Activated CD8-positive, alpha-beta T cell treated with anti-CD3 and anti-CD28 coated beads for 36 hours (primary cell): ENCODE measurements at regions of chr10 and their contacts with region 1.

Region 1: DNA sequence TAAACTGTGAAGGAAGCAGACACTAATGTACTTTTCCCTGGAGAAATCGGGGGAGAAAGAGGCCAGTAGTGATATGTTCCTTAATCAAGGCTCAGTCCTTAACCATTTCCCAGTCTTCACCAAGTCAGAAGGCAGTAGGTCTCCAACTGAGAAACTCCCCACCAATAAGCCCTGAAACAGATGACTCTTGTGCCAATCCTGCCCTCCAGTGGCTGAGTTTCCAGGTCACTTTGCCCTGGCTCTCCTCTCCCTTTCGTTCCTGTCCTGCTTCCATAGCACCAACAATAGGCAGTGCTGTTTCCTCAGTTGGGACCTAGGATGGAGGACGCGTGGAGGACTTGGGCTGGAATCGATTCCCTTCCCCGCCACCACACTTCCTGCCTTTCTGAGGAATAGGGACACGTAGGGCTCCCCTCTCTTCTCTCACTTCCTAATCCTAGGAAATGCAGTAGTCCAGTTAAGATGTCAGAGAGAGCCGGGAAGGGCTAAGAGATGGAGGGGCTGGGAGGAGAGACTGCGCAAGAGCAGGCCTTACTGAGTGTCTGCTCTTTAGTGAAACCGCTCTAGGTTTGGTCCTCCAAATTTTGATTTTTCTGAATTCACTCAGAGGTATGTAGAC is 23.4 kb downstream of the ATOH7 start:
- DNase-seq: peak; percentile 50
- ATAC-seq: peak; percentile 53
- H3K4me3 Mint-ChIP-seq: no peak overlapping the region
- H3K27ac Mint-ChIP-seq: no peak overlapping the region
- H3K4me1 Mint-ChIP-seq: no peaks in the 10 kb centered on the region
- H3K27me3 Mint-ChIP-seq: peaks cover 7% of the 10 kb centered on the region
- CTCF ChIP-seq: no peak

Region 2: GRCh38 chr10:68196701-68197100 is 11.8 kb before region 1 on chr10:
- CTCF ChIA-PET with region 1: interaction called, 14 read pairs
- POLR2A ChIA-PET with region 1: no interaction called
- intact Hi-C with region 1: no loop called
- DNase-seq: no peak
- ATAC-seq: no peak
- H3K4me3 Mint-ChIP-seq: no peak overlapping the region
- H3K27ac Mint-ChIP-seq: no peak overlapping the region
- H3K4me1 Mint-ChIP-seq: no peaks in the 10 kb centered on the region
- H3K27me3 Mint-ChIP-seq: peaks cover 28% of the 10 kb centered on the region
- CTCF ChIP-seq: no peak

Region 3: GRCh38 chr10:68223535-68224165 is 15.1 kb after region 1 on chr10:
- CTCF ChIA-PET with region 1: interaction called, 24 read pairs
- POLR2A ChIA-PET with region 1: interaction called, 4 read pairs
- intact Hi-C with region 1: no loop called
- DNase-seq: peak; percentile 16
- ATAC-seq: peak; percentile 27
- H3K4me3 Mint-ChIP-seq: no peak overlapping the region
- H3K27ac Mint-ChIP-seq: no peak overlapping the region
- H3K4me1 Mint-ChIP-seq: no peaks in the 10 kb centered on the region
- H3K27me3 Mint-ChIP-seq: peaks cover 8% of the 10 kb centered on the region
- CTCF ChIP-seq: no peak

Region 4: GRCh38 chr10:68288717-68289116 is 80.2 kb after region 1 on chr10:
- CTCF ChIA-PET with region 1: interaction called, 12 read pairs
- POLR2A ChIA-PET with region 1: no interaction called
- intact Hi-C with region 1: no loop called
- DNase-seq: no peak
- ATAC-seq: no peak
- H3K4me3 Mint-ChIP-seq: no peak overlapping the region
- H3K27ac Mint-ChIP-seq: no peak overlapping the region
- H3K4me1 Mint-ChIP-seq: no peaks in the 10 kb centered on the region
- H3K27me3 Mint-ChIP-seq: no peaks in the 10 kb centered on the region
- CTCF ChIP-seq: no peak

Region 5: DNA sequence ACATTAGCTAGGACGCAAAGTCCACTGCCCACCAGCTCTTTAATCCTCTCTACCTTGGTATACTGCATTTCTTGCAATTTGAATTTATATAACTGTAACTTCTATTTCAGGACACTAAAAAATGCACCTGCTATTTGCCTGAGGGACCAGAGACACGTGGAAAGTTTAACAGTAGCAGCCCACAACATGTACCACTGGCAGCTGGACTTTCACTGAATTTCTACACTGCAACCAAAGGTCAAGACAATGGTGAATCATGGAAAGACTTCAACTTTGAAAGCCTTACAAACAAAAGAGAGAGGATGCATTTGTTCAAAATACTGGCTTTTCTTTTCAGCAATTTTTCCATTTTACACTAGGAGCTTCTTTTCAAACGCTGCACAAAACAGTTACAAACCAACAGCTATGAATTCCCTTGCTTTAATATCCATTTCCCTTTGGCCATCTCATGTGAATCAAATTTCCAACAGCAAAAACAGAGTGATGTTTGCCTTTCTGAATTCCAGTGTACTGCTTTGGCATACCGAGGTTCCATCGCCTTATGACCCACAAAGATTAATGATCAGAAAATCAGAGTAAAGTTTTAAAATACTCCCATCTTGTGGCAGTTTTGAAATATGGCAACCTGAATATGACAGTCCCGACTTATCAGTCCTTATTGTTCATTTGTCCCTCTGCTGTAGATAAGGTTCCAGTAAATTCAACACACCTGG is 93.4 kb after region 1 on chr10:
- CTCF ChIA-PET with region 1: interaction called, 134 read pairs
- POLR2A ChIA-PET with region 1: no interaction called
- intact Hi-C with region 1: loop called (anchors 5 kb)
- DNase-seq: no peak
- ATAC-seq: peak; percentile 53
- H3K4me3 Mint-ChIP-seq: no peak overlapping the region
- H3K27ac Mint-ChIP-seq: no peak overlapping the region
- H3K4me1 Mint-ChIP-seq: no peaks in the 10 kb centered on the region
- H3K27me3 Mint-ChIP-seq: no peaks in the 10 kb centered on the region
- CTCF ChIP-seq: peak; percentile 70

Region 6: DNA sequence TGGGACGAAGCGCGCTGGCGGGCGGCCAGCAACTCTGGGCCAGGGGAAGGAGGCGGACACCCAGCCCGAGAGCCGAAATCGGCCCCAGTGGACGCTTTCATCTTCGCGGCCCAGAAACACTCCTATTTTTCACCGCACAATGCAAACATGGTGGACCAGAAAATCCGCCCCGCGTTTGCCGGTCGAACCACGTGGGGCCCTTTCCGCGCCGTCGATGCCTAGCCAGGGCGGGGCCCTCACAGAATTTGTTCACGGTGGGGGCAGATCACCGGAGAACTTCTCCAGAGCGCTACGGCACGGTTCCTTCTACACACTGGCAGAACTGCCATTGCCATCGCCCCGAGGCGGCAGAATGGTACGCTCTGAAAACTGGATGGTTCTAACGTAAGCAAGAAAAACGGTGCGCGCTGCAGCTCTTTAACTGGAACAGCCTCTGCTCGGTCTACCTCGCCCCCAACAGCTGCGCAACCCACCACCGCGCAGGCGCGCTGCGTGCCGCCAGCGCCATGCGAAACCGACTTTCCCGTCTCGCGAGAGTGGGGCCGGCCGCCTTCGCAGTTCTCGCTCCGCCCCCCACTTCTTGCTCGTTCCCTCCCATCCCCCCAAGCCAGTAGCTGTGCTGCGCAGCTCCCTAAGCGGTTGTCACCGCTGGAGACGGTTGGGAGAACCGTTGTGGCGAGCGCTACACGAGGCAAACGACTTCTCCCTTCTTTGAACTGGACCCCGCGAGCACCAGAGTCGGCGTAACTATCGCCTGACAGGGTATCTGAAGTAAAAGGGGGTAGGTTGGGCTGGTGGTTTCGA is 123.1 kb after region 1 on chr10 and contains the start of gene HNRNPH3:
- CTCF ChIA-PET with region 1: interaction called, 15 read pairs
- POLR2A ChIA-PET with region 1: no interaction called
- intact Hi-C with region 1: no loop called
- DNase-seq: peak; percentile 98
- ATAC-seq: peak; percentile 90
- H3K4me3 Mint-ChIP-seq: peak within 1 kb of the TSS; percentile 94
- H3K27ac Mint-ChIP-seq: peak within 1 kb of the TSS; percentile 100
- H3K4me1 Mint-ChIP-seq: peaks cover 38% of the 10 kb centered on the region
- H3K27me3 Mint-ChIP-seq: no peaks in the 10 kb centered on the region
- CTCF ChIP-seq: no peak
- total RNA-seq, gene HNRNPH3: 139 to 145 TPM

Region 7: DNA sequence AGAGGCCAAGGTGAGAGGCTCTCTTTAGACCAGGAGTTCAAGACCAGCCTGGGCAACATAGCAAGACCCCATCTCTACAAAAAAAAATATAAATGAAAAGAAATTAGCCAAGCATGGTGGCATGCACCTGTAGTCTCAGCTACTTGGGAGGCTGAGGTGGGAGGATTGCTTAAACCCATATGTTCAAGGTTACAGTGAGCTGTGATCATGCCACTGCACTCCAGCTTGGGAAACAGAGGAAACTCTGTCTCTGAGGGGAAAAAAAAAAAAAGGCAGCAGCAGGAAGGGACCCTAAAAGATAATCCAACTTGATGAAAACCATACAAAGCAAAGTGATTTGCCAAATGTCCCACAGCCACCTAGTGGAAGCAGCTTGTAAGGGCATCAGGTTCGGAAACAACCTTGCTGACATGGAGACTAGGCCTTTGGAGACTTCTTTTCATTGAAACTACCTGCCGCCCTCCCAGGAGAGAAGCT is 139.8 kb after region 1 on chr10:
- CTCF ChIA-PET with region 1: interaction called, 53 read pairs
- POLR2A ChIA-PET with region 1: no interaction called
- intact Hi-C with region 1: loop called (anchors 5 kb)
- DNase-seq: peak; percentile 57
- ATAC-seq: peak; percentile 85
- H3K4me3 Mint-ChIP-seq: no peak overlapping the region
- H3K27ac Mint-ChIP-seq: peak overlapping the region; percentile 75
- H3K4me1 Mint-ChIP-seq: peaks cover 10% of the 10 kb centered on the region
- H3K27me3 Mint-ChIP-seq: no peaks in the 10 kb centered on the region
- CTCF ChIP-seq: peak; percentile 71